Dendritic cell treated with granulocyte-macrophage colony-stimulating factor and Interleukin-4, amounts not matched to agents 40 ng/mL and 50 ng/mL, for 4 days (primary cell): ENCODE measurements at regions of chr2 and their contacts with region 1.

Region 1: DNA sequence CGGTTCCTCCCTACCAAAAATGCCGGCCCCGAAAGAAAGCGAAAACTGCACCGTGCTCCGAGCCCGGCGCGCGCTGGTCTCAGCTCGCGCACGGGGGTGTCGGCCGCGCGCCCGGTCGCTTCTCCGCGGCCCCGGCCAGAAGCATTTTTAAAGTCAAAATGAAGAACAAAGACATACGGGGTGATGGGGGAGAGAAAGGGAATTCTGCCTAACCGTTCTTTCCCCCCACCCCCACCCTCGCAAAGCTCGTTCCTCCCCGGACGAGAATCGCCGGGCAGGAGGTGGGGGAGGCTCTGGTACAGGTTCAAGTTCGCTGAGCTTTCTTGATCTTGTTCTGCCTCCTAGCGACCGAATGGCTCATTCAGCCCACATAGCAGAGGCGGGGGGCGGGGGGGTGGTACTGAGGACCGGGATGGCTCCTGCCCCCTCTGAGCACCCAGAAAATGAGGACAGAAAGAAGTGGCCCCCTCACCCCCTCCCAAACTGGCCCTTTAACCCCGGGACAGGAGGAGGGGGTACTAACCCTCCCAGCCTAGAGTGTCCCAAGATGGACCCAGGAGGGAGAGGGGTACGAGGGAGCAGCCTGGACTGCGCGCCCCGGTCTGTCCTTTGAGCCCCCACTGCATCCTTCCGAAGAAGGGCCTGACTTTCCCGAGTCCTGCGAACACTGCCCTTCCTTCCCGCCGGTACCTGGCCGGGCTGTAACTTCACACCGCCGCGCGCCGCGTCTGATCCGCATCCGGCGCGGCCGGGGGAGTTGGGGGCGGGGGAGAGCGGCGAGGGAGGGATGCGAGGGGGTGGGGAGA is 3.1 kb downstream of the BCL11A start:
- H3K4me3 Mint-ChIP-seq: peak overlapping the region; percentile 94
- H3K27ac Mint-ChIP-seq: peak overlapping the region; percentile 88
- H3K4me1 Mint-ChIP-seq: peaks cover 47% of the 10 kb centered on the region
- H3K27me3 Mint-ChIP-seq: no peaks in the 10 kb centered on the region

Region 2: GRCh38 chr2:58762176-58762781 is 1788.1 kb before region 1 on chr2:
- intact Hi-C with region 1: loop called (anchors 10 kb)
- H3K4me3 Mint-ChIP-seq: no peak overlapping the region
- H3K27ac Mint-ChIP-seq: no peak overlapping the region
- H3K4me1 Mint-ChIP-seq: peaks cover 14% of the 10 kb centered on the region
- H3K27me3 Mint-ChIP-seq: no peaks in the 10 kb centered on the region

Region 3: GRCh38 chr2:60152226-60152833 is 398.1 kb before region 1 on chr2:
- intact Hi-C with region 1: loop called (anchors 2 kb)
- H3K4me3 Mint-ChIP-seq: no peak overlapping the region
- H3K27ac Mint-ChIP-seq: no peak overlapping the region
- H3K4me1 Mint-ChIP-seq: peaks cover 6% of the 10 kb centered on the region
- H3K27me3 Mint-ChIP-seq: no peaks in the 10 kb centered on the region

Region 4: GRCh38 chr2:60439219-60439974 is 111.0 kb before region 1 on chr2:
- intact Hi-C with region 1: loop called (anchors 10 kb)
- H3K4me3 Mint-ChIP-seq: peak overlapping the region; percentile 65
- H3K27ac Mint-ChIP-seq: peak overlapping the region; percentile 88
- H3K4me1 Mint-ChIP-seq: peaks cover 61% of the 10 kb centered on the region
- H3K27me3 Mint-ChIP-seq: no peaks in the 10 kb centered on the region

Region 5: DNA sequence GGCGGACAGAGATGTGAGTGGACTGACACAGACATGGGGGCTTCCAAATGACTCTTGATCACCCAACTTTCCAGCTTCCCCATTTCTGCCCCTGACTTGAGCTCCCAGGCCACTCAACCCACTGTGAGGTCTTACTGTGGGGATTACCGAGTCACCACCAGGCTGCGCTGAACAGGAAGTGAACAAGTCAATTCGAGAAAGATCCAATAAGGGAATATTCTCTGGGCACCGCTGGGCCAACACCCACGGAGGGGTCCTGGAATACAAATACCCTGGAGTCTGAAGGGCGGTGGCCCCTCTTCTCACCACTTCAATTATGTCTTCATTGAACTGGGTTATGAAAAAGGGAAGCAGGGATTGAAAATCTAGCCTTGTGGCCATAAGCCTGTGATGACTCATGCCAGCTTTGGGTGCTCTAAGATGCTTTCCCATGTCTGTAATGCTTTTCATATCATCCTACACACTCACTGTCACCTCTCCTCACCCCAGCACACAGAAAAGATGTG is 34.6 kb before region 1 on chr2:
- intact Hi-C with region 1: loop called (anchors 2 kb)
- H3K4me3 Mint-ChIP-seq: peak overlapping the region; percentile 22
- H3K27ac Mint-ChIP-seq: peak overlapping the region; percentile 77
- H3K4me1 Mint-ChIP-seq: peaks cover 67% of the 10 kb centered on the region
- H3K27me3 Mint-ChIP-seq: no peaks in the 10 kb centered on the region

Region 6: GRCh38 chr2:60529785-60530627 is 20.4 kb before region 1 on chr2:
- intact Hi-C with region 1: no loop called
- H3K4me3 Mint-ChIP-seq: no peak overlapping the region
- H3K27ac Mint-ChIP-seq: peak overlapping the region; percentile 68
- H3K4me1 Mint-ChIP-seq: peaks cover 78% of the 10 kb centered on the region
- H3K27me3 Mint-ChIP-seq: no peaks in the 10 kb centered on the region